ENCODE measurements at regions of chr13 and their contacts with region 1.

Region 1: GRCh38 chr13:76764429-76764828 is 121.8 kb downstream of the KCTD12 start:
- DNase-seq: peak; percentile 32 to 86
- ATAC-seq: peak; percentile 93 to 99 (median 98)
- H3K4me3 ChIP-seq: peak overlapping the region in 7 of 10 donors; percentile 10 to 39 (median 25)
- H3K27ac ChIP-seq: peak overlapping the region; percentile 59 to 85 (median 78)
- H3K4me1 ChIP-seq: peaks cover 0 to 32% (median 25%) of the 10 kb centered on the region in 9 donors
- H3K27me3 ChIP-seq: no peaks in the 10 kb centered on the region
- CTCF ChIP-seq: no peak

Region 2: GRCh38 chr13:75876360-75877050 is 887.9 kb before region 1 on chr13:
- intact Hi-C with region 1: loop called in 1 of 10 experiments (anchors 5 kb)
- DNase-seq: peak in 1 of 2 donors; percentile 64
- ATAC-seq: peak; percentile 71 to 92 (median 87)
- H3K4me3 ChIP-seq: no peak overlapping the region
- H3K27ac ChIP-seq: no peak overlapping the region
- H3K4me1 ChIP-seq: peaks cover 0 to 7% (median 0%) of the 10 kb centered on the region in 9 donors
- H3K27me3 ChIP-seq: no peaks in the 10 kb centered on the region
- CTCF ChIP-seq: peak; percentile 87 to 95 (median 89)

Region 3: DNA sequence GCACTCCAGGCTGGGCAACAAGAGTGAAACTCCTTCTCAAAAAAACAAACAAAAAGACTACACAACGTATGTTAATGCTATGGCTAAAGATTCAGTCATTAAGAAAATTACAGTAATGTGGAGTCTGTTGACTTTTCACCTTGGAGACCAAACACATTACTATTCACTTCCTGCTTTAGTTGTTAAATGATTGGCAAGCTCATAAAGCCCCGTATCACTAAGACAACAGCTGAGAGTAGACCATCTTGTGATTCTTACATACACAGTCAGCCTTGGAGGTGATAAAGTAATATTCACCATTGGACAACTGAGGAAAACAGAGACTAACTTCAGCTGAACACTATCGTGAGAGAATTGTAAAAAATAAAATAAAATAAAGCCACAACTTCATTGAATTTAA is 35.3 kb after region 1 on chr13:
- intact Hi-C with region 1: loop called in 2 of 10 experiments (anchors 5 kb)
- DNase-seq: no peak
- ATAC-seq: peak in 5 of 8 donors; percentile 28 to 68 (median 48)
- H3K4me3 ChIP-seq: no peak overlapping the region
- H3K27ac ChIP-seq: no peak overlapping the region
- H3K4me1 ChIP-seq: peaks cover 0 to 27% (median 14%) of the 10 kb centered on the region in 9 donors
- H3K27me3 ChIP-seq: no peaks in the 10 kb centered on the region
- CTCF ChIP-seq: no peak

Measured in heart right ventricle (tissue), 16 donors.